Ascending aorta (tissue), 2 donors: ENCODE measurements at regions of chr11 and their contacts with region 1.

Region 1: GRCh38 chr11:61161190-61162091 is at the start of gene VPS37C:
- DNase-seq: peak; percentile 57 to 94
- H3K4me3 ChIP-seq: peak within 1 kb of the TSS; percentile 73 to 91
- H3K27ac ChIP-seq: peak within 1 kb of the TSS; percentile 96 to 99
- H3K4me1 ChIP-seq: peaks cover 3 to 24% of the 10 kb centered on the region in 2 donors
- H3K27me3 ChIP-seq: no peaks in the 10 kb centered on the region
- CTCF ChIP-seq: peak in 1 of 3 experiments; percentile 22
- total RNA-seq, gene VPS37C: 25.8 TPM

Region 2: DNA sequence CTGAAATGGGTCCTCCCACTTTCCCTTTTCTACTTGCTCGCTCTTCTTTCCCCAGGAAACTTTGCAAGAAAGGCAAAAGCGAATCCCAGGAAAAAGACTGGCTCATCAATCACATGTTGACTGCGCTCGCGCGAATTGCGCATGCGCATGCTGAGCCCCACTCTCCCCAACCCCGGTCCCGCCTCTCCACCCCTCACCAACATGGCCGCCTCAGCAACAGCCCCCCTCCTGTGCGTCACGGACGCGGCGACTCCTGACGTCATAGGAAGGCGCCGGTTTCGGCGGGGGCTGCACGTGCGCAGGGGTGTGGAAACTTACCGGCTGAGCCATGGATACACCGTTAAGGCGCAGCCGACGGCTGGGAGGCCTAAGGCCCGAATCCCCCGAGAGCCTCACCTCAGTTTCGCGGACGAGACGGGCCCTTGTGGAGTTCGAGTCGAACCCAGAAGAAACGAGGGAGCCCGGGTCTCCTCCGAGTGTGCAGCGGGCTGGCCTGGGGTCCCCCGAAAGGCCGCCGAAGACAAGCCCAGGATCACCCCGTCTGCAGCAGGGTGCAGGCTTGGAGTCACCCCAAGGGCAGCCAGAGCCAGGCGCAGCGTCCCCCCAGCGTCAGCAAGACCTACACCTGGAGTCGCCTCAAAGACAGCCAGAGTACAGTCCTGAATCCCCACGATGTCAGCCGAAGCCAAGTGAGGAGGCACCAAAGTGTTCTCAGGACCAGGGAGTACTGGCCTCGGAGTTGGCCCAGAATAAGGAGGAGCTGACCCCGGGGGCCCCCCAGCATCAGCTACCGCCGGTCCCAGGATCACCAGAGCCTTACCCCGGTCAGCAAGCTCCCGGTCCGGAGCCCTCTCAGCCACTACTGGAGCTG is 319.4 kb before region 1 on chr11 and contains the start of gene CCDC86:
- intact Hi-C with region 1: loop called (anchors 5 kb)
- DNase-seq: peak; percentile 90 to 98
- H3K4me3 ChIP-seq: peak within 1 kb of the TSS; percentile 76 to 94
- H3K27ac ChIP-seq: peak within 1 kb of the TSS; percentile 66 to 73
- H3K4me1 ChIP-seq: peaks cover 19 to 24% of the 10 kb centered on the region in 2 donors
- H3K27me3 ChIP-seq: no peaks in the 10 kb centered on the region
- CTCF ChIP-seq: no peak
- total RNA-seq, gene CCDC86: 16.0 TPM

Region 3: GRCh38 chr11:61384271-61385242 is 223.1 kb after region 1 on chr11:
- intact Hi-C with region 1: no loop called
- DNase-seq: no peak
- H3K4me3 ChIP-seq: no peak overlapping the region
- H3K27ac ChIP-seq: no peak overlapping the region
- H3K4me1 ChIP-seq: peaks cover 0 to 5% of the 10 kb centered on the region in 2 donors
- H3K27me3 ChIP-seq: no peaks in the 10 kb centered on the region
- CTCF ChIP-seq: no peak